ENCODE measurements at regions of chr2 and their contacts with region 1.

Region 1: DNA sequence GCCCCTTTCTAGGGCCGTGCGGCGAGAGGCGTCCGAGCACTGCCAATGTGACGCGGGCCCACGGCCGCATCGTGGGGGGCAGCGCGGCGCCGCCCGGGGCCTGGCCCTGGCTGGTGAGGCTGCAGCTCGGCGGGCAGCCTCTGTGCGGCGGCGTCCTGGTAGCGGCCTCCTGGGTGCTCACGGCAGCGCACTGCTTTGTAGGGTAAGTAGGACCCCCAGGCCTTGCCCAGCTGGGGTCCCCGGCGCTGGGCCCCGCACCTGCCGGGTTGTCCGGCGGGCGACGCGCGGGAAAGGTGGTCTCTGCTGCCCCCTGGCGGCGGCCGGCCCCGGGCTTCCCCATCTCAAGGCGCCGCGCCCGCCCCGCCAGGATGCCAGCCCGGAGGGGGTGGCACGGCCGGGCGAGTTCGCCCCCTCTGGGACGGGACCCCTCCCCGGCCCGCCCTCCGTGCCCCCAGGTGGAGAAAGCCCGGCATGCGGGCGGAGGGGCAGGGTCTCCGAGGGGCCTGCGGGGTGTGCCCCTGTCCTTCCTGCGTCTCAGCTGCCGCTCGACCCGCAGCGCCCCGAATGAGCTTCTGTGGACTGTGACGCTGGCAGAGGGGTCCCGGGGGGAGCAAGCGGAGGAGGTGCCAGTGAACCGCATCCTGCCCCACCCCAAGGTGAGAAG is 1.9 kb downstream of the PRSS56 start:
- DNase-seq: peak; percentile 39 to 83 (median 52)
- ATAC-seq: peak in 2 of 4 donors; percentile 35 to 61
- H3K4me3 ChIP-seq: peak overlapping the region in 10 of 12 donors; percentile 3 to 40 (median 16)
- H3K27ac ChIP-seq: no peak overlapping the region
- H3K4me1 ChIP-seq: peaks cover 0 to 44% (median 21%) of the 10 kb centered on the region in 12 donors
- H3K27me3 ChIP-seq: peaks cover 30 to 72% (median 47%) of the 10 kb centered on the region in 9 donors
- CTCF ChIP-seq: peak; percentile 79 to 96 (median 90)
- POLR2A ChIP-seq: no peak

Region 2: GRCh38 chr2:232434091-232434490 is 88.0 kb before region 1 on chr2:
- intact Hi-C with region 1: no loop called
- DNase-seq: peak in 1 of 5 donors; percentile 54
- ATAC-seq: no peak
- H3K4me3 ChIP-seq: no peak overlapping the region
- H3K27ac ChIP-seq: no peak overlapping the region
- H3K4me1 ChIP-seq: no peaks in the 10 kb centered on the region
- H3K27me3 ChIP-seq: peaks cover 0 to 4% (median 0%) of the 10 kb centered on the region in 9 donors
- CTCF ChIP-seq: no peak
- POLR2A ChIP-seq: no peak

Region 3: GRCh38 chr2:232444409-232445148 is 77.5 kb before region 1 on chr2:
- intact Hi-C with region 1: loop called in 8 of 10 experiments (anchors 2 to 5 kb)
- DNase-seq: peak in 1 of 5 donors; percentile 55
- ATAC-seq: no peak
- H3K4me3 ChIP-seq: no peak overlapping the region
- H3K27ac ChIP-seq: no peak overlapping the region
- H3K4me1 ChIP-seq: peaks cover 0 to 4% (median 0%) of the 10 kb centered on the region in 12 donors
- H3K27me3 ChIP-seq: no peaks in the 10 kb centered on the region
- CTCF ChIP-seq: peak; percentile 14 to 66 (median 37)
- POLR2A ChIP-seq: no peak

Region 4: DNA sequence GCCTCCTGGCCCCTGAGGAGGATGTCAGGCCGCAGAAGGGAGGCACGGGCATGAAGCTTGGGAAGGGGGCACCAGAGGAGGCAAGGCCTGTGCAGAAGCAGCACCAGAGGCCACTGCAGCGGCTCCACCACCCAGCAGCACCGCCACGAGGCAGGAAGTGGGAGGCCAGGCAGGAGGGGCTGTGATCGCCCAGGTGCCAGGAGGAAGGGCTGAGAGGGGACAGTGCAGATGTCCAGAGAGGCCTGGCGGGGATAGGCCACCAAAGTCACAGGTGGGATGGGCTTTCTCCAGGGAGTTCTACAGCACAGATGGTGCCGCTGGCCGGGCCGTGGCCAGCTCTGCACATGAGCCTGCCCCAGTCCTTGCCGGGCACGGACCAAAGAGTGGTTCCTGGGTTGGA is 72.1 kb before region 1 on chr2:
- intact Hi-C with region 1: loop called in 9 of 10 experiments (anchors 2 to 5 kb)
- DNase-seq: no peak
- ATAC-seq: no peak
- H3K4me3 ChIP-seq: no peak overlapping the region
- H3K27ac ChIP-seq: no peak overlapping the region
- H3K4me1 ChIP-seq: no peaks in the 10 kb centered on the region
- H3K27me3 ChIP-seq: no peaks in the 10 kb centered on the region
- CTCF ChIP-seq: no peak
- POLR2A ChIP-seq: no peak

Region 5: DNA sequence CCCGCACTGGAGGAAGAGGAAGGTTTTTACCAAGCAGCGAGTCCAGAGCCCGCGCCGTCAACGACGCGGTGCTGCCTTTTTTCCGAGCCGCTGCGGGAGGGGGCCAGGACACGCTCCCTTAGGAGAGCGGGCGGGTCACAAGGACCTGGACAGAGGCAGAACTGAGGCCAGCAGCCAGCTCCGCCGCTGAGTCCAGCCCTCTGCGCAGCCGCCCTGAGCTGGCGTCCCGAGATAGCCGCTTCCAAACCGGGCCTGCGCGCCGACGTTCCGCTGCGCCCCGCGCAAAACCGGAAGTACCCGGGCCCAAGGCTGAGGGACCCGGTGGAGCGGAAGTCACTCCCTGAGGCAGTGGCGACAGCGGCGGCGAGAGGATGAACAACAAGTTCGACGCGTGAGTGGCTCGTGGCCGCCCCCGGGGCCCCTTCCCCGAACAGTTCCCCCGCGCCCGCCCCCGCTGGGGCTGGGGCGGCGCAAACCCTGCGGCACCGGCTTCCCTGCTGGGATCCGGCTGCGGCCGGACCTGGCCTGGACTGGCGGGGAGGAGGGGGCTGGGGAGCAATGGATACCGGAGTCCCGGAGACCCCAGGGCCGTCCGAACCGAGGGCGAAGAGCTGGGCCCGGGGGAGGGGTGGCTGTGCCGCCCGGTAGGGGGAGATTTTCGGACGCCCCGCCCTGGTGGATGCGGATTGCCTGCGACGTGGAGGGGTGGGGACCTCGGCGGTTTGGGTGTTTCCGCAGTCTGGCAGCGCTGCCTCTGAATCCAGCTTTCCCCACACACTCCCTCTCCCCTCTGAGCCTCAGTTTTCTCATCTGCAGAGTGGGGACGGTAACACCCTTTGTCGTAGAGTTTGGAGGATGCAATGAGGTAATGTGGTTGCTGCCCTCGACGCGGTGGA is 28.5 kb after region 1 on chr2 and contains the starts of genes EIF4E2 and TIGD1:
- intact Hi-C with region 1: no loop called
- DNase-seq: peak; percentile 94 to 98 (median 96)
- ATAC-seq: peak; percentile 96 to 98 (median 98)
- H3K4me3 ChIP-seq: peak within 1 kb of the TSS; percentile 71 to 99 (median 86)
- H3K27ac ChIP-seq: peak within 1 kb of the TSS; percentile 80 to 100 (median 97)
- H3K4me1 ChIP-seq: peaks cover 0 to 63% (median 20%) of the 10 kb centered on the region in 12 donors
- H3K27me3 ChIP-seq: no peaks in the 10 kb centered on the region
- CTCF ChIP-seq: peak in 11 of 12 donors; percentile 20 to 47 (median 33)
- POLR2A ChIP-seq: peak in 1 of 2 donors; percentile 82
- total RNA-seq, gene EIF4E2: 15.3 to 49.8 (median 38.8) TPM
- total RNA-seq, gene TIGD1: 0.99 to 3.8 (median 1.6) TPM

Measured in heart left ventricle (tissue), 16 donors.